ENCODE measurements at regions of chr1 and their contacts with region 1.

Region 1: GRCh38 chr1:155167166-155168104 is 5.7 kb downstream of the KRTCAP2 start:
- DNase-seq: peak; percentile 96
- H3K4me3 Mint-ChIP-seq: peak overlapping the region; percentile 30
- H3K27ac Mint-ChIP-seq: no peak overlapping the region
- H3K4me1 Mint-ChIP-seq: peaks cover 21% of the 10 kb centered on the region
- H3K27me3 Mint-ChIP-seq: no peaks in the 10 kb centered on the region
- CTCF ChIP-seq: peak; percentile 98

Region 2: DNA sequence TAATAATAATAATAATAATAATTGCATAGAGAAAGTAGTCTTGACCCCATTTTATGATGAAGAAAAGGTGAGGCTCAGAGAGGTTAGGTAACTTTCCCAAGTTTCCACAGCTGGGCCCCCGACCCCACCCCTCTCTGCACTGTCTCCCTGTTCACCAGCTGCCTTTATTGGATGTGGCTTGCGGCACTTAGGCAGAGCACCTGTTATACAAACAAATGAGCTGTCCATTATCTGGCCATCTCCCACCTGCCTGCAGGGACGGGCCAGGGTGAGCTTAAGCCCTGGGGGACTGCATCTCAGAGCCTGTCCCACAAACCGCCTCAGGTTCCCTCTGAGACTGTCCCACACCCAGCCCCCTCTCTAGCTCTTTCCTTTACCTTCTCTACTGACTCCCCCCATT is 49.8 kb before region 1 on chr1:
- CTCF ChIA-PET with region 1: interaction called, 11 read pairs
- POLR2A ChIA-PET with region 1: interaction called, 3 read pairs
- intact Hi-C with region 1: no loop called
- DNase-seq: no peak
- H3K4me3 Mint-ChIP-seq: no peak overlapping the region
- H3K27ac Mint-ChIP-seq: no peak overlapping the region
- H3K4me1 Mint-ChIP-seq: no peaks in the 10 kb centered on the region
- H3K27me3 Mint-ChIP-seq: no peaks in the 10 kb centered on the region
- CTCF ChIP-seq: no peak

Region 3: DNA sequence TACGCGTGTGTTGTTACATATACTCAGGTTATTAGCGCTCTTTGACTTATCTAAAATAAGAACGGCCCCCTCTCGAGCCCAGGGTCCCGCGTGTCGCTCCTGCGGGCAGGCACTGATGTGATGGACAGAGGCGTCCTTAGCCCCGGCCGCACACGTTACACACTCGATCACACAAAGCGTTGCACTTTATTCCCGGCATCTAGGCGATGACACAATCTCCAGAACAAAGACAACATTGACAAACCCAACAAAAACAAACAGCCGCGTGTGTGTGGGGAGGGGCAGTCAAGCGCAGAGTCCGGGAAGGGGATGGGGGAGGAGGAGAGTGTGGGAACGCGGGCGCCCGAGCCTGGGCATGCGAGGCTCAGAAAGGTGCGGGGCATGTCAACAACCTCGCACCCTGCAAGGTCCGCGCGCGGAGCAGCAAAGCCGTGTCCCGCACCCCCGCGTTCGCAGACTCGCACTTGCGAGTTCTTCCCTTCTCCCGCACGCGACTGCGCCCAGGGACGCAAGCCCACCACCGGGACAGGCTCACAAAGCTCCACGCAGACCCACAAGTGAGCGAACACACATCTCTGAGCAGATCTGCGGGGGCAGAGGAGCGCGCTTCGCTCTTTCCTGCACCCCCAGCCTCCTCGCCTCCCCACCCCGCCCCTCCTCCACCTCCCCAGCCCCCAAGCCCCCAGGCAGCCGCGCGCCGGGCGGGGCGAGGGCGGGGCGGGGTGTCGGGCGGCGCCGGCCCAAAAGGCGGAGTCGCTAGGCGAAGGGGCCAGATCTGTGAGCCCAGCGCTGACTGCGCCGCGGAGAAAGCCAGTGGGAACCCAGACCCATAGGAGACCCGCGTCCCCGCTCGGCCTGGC is 40.1 kb before region 1 on chr1 and contains the start of gene EFNA1:
- CTCF ChIA-PET with region 1: interaction called, 36 read pairs
- POLR2A ChIA-PET with region 1: interaction called, 75 read pairs
- intact Hi-C with region 1: loop called (anchors 1 kb)
- DNase-seq: peak; percentile 99
- H3K4me3 Mint-ChIP-seq: peak within 1 kb of the TSS; percentile 100
- H3K27ac Mint-ChIP-seq: peak within 1 kb of the TSS; percentile 90
- H3K4me1 Mint-ChIP-seq: peaks cover 60% of the 10 kb centered on the region
- H3K27me3 Mint-ChIP-seq: no peaks in the 10 kb centered on the region
- CTCF ChIP-seq: no peak
- total RNA-seq, gene EFNA1: 38.9 and 42.3 TPM in 2 replicates

Region 4: DNA sequence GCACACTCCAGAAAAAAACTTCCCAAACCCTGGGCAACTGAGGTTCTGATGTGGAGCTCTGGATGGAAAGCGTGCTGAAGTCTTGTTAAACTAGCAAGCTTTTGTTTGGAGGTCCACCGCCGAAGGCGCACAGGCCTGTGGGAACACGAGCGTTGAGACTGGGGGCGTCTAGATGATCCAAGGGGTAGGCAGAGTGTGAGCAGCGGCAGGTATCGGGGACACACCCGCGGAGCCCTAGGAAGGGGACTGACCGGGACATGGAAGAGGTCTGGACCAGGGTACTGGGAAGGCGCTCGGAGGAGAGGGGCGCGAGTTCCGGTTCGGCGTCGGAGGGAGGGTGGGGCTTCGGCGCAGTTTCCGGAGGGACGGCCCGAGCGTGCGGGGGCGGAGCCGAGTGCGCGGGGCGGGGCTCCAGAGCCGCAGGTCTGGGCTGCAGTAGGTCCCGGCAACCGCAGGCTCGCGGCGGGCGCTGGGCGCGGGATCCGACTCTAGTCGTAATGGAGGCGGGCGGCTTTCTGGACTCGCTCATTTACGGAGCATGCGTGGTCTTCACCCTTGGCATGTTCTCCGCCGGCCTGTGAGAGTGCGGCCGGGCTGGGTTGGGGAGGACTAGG is 31.9 kb before region 1 on chr1 and contains the start of gene SLC50A1:
- CTCF ChIA-PET with region 1: interaction called, 36 read pairs
- POLR2A ChIA-PET with region 1: interaction called, 75 read pairs
- intact Hi-C with region 1: no loop called
- DNase-seq: peak; percentile 94
- H3K4me3 Mint-ChIP-seq: peak within 1 kb of the TSS; percentile 80
- H3K27ac Mint-ChIP-seq: peak within 1 kb of the TSS; percentile 94
- H3K4me1 Mint-ChIP-seq: peaks cover 50% of the 10 kb centered on the region
- H3K27me3 Mint-ChIP-seq: no peaks in the 10 kb centered on the region
- CTCF ChIP-seq: no peak
- total RNA-seq, gene SLC50A1: 91.2 and 97.8 TPM in 2 replicates

Region 5: GRCh38 chr1:155145491-155145890 is 21.9 kb before region 1 on chr1:
- CTCF ChIA-PET with region 1: interaction called, 18 read pairs
- POLR2A ChIA-PET with region 1: interaction called, 16 read pairs
- intact Hi-C with region 1: no loop called
- DNase-seq: no peak
- H3K4me3 Mint-ChIP-seq: no peak overlapping the region
- H3K27ac Mint-ChIP-seq: no peak overlapping the region
- H3K4me1 Mint-ChIP-seq: no peaks in the 10 kb centered on the region
- H3K27me3 Mint-ChIP-seq: peaks cover 8% of the 10 kb centered on the region
- CTCF ChIP-seq: peak; percentile 12